ENCODE measurements at regions of chr9 and their contacts with region 1.

Region 1: DNA sequence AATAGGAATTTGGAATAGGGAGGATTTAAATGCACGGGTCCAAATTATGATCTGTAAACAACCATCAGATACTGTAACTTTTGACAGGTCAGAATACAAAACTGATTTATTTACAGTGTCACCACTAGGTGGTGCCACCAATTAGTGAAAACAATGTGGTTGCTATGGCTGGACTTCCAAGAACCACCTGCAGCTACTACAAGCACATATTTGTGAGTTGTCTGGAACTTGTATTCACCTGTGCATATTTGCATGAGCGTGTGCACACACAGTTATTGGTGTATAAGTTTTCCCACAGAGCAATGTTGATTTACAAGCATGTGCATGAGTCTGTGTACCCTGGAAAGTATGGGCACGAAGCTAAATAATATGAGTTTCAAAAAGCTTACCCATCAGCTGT is 3.0 kb upstream of the HRCT1 start:
- DNase-seq: peak; percentile 32
- H3K4me3 Mint-ChIP-seq: no peak overlapping the region
- H3K27ac Mint-ChIP-seq: no peak overlapping the region
- H3K4me1 Mint-ChIP-seq: peaks cover 10% of the 10 kb centered on the region
- H3K27me3 Mint-ChIP-seq: peaks cover 12% of the 10 kb centered on the region

Region 2: DNA sequence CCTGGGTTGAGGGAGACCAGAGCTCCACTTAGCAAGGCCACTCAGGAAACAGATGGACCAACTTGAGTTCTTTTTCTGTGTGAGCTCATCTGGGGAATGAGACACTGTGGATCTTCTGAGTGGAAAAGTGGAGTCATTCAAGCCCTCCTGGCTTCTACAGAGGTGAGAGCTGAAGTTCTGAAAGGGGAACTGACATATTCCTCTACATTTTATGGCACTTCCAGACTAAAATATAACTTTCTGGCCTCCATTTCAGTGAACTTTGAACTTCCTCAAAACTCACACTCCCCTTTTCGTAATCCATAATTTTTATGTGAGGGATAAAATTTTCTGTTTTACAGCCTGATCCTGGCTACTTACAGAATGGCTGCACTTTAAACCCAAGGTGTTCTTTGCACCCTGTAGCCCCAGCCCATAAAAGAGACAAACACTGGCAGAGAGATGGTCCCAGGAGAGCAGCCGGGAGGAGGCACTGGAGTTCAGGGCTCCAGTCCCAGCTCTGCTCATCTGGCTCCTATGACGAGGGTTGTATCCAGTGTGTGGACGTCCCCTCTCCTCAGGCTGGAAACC is 17.1 kb after region 1 on chr9:
- CTCF ChIA-PET with region 1: interaction called, 17 read pairs
- POLR2A ChIA-PET with region 1: no interaction called
- DNase-seq: no peak
- H3K4me3 Mint-ChIP-seq: no peak overlapping the region
- H3K27ac Mint-ChIP-seq: no peak overlapping the region
- H3K4me1 Mint-ChIP-seq: no peaks in the 10 kb centered on the region
- H3K27me3 Mint-ChIP-seq: no peaks in the 10 kb centered on the region

Region 3: GRCh38 chr9:35945341-35946018 is 42.4 kb after region 1 on chr9:
- CTCF ChIA-PET with region 1: interaction called, 56 read pairs
- POLR2A ChIA-PET with region 1: no interaction called
- DNase-seq: peak; percentile 65
- H3K4me3 Mint-ChIP-seq: no peak overlapping the region
- H3K27ac Mint-ChIP-seq: no peak overlapping the region
- H3K4me1 Mint-ChIP-seq: peaks cover 22% of the 10 kb centered on the region
- H3K27me3 Mint-ChIP-seq: no peaks in the 10 kb centered on the region

Measured in activated CD4-positive, alpha-beta memory T cell treated with anti-CD3 and anti-CD28 coated beads, Interleukin-2, amount 10 ng/mL, durations not matched to agents 7 days and 5 days (primary cell).